Upper lobe of right lung (tissue), 1 donor: ENCODE measurements at regions of chr4 and their contacts with region 1.

Region 1: DNA sequence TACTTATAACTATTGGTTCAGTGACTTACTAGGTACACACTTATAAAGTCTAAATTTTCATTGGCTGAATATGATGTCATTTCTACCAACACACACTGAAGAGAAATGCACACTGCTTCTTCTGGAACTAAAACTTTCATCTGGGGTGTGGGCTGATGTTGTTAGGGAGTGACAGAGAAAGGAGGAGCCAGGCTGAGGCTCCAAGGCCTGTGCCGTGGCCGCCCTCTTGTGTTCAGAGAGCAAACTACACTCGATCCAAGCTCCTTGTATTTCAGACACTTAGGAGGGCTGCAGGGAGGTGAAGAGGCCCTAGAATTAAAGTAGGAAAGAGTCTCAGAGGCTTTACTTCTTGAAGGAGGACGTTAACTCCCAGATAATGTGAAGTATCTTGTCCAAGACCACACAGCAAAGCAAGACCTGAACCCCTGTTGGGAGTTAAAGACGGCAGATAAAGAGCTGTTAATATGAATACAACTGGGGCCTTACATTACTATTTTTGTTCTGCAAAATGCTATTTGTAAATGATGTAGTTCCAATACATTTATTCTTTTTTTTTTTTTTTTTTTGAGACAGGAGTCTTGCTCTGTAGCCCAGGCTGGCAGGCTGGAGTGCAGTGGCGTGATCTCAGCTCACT is 137.5 kb downstream of the AFAP1 start:
- DNase-seq: peak; percentile 80
- ATAC-seq: peak; percentile 87
- H3K4me3 ChIP-seq: no peak overlapping the region
- H3K27ac ChIP-seq: no peak overlapping the region
- H3K4me1 ChIP-seq: peaks cover 31% of the 10 kb centered on the region
- H3K27me3 ChIP-seq: no peaks in the 10 kb centered on the region
- CTCF ChIP-seq: peak; percentile 94

Region 2: DNA sequence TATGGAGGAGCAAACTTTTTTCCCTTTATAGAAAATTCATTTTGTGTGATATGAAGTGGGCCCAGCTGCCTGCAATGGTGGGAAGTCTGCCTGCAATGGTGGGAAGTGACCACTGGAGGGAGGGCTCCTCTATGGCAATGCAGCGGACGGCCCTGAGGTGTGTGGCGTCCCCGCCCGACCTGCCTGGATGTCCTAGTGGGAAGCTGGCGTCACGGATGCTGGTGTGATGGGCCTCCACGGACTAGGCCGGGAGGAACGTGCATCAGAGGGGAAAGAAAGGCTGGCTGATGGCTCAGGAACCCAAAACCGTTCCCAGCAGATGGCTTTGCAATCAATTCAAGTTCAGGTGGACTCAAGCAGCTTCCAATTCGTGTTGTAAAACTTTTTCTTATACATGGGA is 40.5 kb before region 1 on chr4:
- intact Hi-C with region 1: loop called (anchors 5 kb)
- DNase-seq: peak; percentile 86
- ATAC-seq: peak; percentile 90
- H3K4me3 ChIP-seq: no peak overlapping the region
- H3K27ac ChIP-seq: no peak overlapping the region
- H3K4me1 ChIP-seq: peaks cover 10% of the 10 kb centered on the region
- H3K27me3 ChIP-seq: no peaks in the 10 kb centered on the region
- CTCF ChIP-seq: peak; percentile 83

Region 3: DNA sequence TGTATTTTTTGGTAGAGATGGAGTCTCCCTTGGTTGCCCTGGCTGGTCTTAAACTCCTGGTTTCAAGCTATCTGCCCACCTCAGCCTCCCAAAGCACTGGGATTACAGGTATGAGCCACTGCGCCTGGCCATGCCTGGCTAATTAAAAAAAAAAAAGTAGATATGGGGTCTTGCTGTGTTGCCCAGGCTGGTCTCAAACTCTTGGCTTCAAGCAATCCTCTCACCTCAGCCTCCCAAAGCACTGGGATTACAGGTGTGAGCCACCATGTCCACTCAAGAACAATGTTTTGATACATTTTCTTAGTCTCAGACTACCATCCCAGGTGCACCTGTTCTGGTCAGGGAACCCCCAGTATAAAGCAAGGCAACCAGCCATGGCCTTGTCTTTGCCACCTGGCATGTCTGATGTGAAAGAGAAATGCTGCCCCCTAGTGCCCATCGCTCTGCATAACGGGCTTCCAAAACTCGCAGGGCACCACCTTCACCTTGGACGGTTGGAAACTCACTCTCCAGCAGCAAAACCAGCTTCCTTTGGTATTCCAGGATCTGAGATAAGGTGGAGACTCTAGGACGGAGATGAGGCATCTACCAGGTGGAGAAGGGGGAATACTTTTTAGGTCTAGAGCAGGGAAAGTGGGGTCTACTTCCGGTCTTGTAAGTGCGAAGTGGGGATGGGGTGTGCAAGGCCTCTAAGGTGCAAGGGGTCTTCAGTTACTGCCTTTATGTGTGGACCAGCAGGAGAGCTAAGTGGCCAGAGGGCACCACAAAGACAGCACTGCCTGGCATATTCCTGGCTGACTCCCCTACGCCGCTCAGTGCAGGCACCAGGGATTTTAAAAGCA is 185.2 kb after region 1 on chr4:
- intact Hi-C with region 1: loop called (anchors 5 kb)
- DNase-seq: peak; percentile 79
- ATAC-seq: peak; percentile 90
- H3K4me3 ChIP-seq: no peak overlapping the region
- H3K27ac ChIP-seq: no peak overlapping the region
- H3K4me1 ChIP-seq: peaks cover 14% of the 10 kb centered on the region
- H3K27me3 ChIP-seq: no peaks in the 10 kb centered on the region
- CTCF ChIP-seq: peak; percentile 94